ENCODE measurements at regions of chr11 and their contacts with region 1.

Region 1: GRCh38 chr11:124875943-124876817 is 10.9 kb downstream of the ROBO3 start:
- DNase-seq: peak; percentile 96
- ATAC-seq: peak; percentile 96
- H3K4me3 ChIP-seq: peak overlapping the region; percentile 58
- H3K27ac ChIP-seq: peak overlapping the region; percentile 83
- H3K4me1 ChIP-seq: peaks cover 3% of the 10 kb centered on the region
- H3K27me3 ChIP-seq: peaks cover 23% of the 10 kb centered on the region
- CTCF ChIP-seq: peak; percentile 80
- POLR2A ChIP-seq: peak; percentile 85
- RAD21 ChIP-seq: peak; percentile 57

Region 2: GRCh38 chr11:124865921-124866583 is 10.1 kb before region 1 on chr11:
- CTCF ChIA-PET with region 1: interaction called, 19 read pairs
- POLR2A ChIA-PET with region 1: no interaction called
- dilution Hi-C with region 1: no loop called
- in situ Hi-C with region 1: no loop called
- intact Hi-C with region 1: no loop called
- DNase-seq: peak; percentile 15
- ATAC-seq: peak; percentile 56
- H3K4me3 ChIP-seq: peak overlapping the region; percentile 20; the same call in 1 of the 2 replicates
- H3K27ac ChIP-seq: no peak overlapping the region
- H3K4me1 ChIP-seq: peaks cover 2% of the 10 kb centered on the region
- H3K27me3 ChIP-seq: peaks cover 97% of the 10 kb centered on the region
- CTCF ChIP-seq: peak; percentile 69
- POLR2A ChIP-seq: no peak
- RAD21 ChIP-seq: peak; percentile 42; the same call in 1 of the 2 replicates

Region 3: DNA sequence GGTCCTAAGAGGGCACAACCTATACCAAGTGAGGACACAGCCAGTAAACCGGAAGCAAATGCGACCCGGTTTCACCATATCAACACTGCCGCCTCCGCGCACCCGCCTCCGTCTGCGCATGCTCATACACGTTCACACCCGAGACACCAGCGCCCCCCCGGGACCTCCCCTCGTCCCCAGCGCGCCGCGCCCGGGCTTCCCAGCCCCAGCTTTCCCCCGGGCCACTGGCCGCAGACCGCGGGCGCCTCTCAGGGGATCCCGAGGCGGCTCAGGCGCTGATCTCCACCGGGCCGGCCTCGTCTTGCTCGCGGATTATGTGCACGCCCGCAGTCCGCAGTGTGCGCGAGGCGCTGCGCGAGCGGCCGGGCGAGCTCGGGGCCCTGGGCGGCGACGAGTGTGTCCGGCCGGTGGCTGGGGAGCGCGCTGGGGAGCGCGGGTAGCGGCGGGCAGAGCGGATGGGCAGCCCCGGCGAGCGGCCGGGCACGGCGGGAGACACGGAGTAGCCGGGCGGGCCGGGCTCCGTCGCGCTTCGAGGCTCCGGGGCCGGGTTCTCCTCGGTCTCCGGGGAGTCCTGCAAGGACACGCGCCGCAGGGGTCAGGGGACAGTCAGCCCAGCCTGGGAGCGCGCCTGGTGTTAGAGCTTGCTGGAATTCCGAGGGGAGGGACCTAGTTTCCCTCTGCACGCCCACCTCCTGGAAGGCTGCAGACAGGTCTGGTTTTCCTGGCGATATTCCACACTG is 44.9 kb after region 1 on chr11:
- CTCF ChIA-PET with region 1: no interaction called
- POLR2A ChIA-PET with region 1: no interaction called
- dilution Hi-C with region 1: no loop called
- in situ Hi-C with region 1: no loop called
- intact Hi-C with region 1: loop called (anchors 2 kb)
- DNase-seq: peak; percentile 47
- ATAC-seq: peak; percentile 76
- H3K4me3 ChIP-seq: peak overlapping the region; percentile 31
- H3K27ac ChIP-seq: peak overlapping the region; percentile 8; the same call in 1 of the 2 replicates
- H3K4me1 ChIP-seq: peaks cover 8% of the 10 kb centered on the region
- H3K27me3 ChIP-seq: no peaks in the 10 kb centered on the region
- CTCF ChIP-seq: 0 out of 2 replicates have a peak, but pooled peaks have one; percentile 13
- POLR2A ChIP-seq: no peak
- RAD21 ChIP-seq: no peak

Region 4: DNA sequence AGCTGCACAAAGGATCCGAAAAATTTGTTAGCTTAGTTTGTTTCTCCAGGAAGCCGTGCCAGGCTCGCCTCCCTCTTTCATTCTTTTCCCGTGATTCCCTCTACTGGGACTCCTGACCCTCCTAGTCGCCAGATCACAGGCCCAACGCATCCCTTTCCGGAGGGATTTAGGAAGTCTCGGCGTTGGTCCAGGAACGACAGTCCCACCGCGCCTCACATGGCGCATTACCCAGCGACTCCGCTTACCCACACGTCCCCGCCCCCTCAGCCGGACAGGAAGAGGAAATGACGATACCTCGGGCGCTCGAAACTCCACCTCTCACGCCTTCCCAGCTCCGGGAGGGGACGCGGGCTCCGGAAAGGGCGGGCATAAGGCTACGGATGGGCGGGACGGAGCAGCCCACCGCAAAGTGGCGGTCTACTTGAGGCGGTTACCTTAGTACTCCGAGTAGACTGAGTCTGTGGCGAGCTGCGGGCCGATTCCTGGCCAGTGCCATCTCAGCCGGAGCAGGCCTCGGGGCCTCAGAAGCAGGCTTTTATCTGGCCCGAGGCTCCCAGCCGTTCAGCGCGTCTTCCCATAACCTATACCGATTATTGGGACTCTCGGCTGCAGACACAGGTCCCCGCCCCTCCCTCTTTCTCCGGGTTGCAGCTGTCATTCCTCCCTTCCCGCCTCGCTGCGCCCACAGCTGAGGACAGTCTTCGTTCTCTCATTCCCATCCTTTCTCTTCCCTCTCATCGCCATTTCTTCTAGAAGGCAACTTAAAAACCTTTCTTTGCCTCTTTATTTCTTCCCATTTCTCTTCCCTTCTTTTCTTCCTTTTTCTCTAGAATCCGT is 77.8 kb after region 1 on chr11 and contains the start of gene CCDC15:
- CTCF ChIA-PET with region 1: interaction called, 10 read pairs
- POLR2A ChIA-PET with region 1: interaction called, 6 read pairs
- dilution Hi-C with region 1: no loop called
- in situ Hi-C with region 1: loop called (anchors 5 kb)
- intact Hi-C with region 1: loop called (anchors 1 kb)
- DNase-seq: peak; percentile 97
- ATAC-seq: peak; percentile 99
- H3K4me3 ChIP-seq: peak within 1 kb of the TSS; percentile 60
- H3K27ac ChIP-seq: peak within 1 kb of the TSS; percentile 75
- H3K4me1 ChIP-seq: peaks cover 2% of the 10 kb centered on the region; the same call in 1 of the 2 replicates
- H3K27me3 ChIP-seq: no peaks in the 10 kb centered on the region
- CTCF ChIP-seq: 0 out of 2 replicates have a peak, but pooled peaks have one; percentile 3
- POLR2A ChIP-seq: peak; percentile 90
- RAD21 ChIP-seq: peak; percentile 5; the same call in 1 of the 2 replicates
- total RNA-seq, gene CCDC15: 2.0 and 2.5 TPM in 2 replicates

Region 5: DNA sequence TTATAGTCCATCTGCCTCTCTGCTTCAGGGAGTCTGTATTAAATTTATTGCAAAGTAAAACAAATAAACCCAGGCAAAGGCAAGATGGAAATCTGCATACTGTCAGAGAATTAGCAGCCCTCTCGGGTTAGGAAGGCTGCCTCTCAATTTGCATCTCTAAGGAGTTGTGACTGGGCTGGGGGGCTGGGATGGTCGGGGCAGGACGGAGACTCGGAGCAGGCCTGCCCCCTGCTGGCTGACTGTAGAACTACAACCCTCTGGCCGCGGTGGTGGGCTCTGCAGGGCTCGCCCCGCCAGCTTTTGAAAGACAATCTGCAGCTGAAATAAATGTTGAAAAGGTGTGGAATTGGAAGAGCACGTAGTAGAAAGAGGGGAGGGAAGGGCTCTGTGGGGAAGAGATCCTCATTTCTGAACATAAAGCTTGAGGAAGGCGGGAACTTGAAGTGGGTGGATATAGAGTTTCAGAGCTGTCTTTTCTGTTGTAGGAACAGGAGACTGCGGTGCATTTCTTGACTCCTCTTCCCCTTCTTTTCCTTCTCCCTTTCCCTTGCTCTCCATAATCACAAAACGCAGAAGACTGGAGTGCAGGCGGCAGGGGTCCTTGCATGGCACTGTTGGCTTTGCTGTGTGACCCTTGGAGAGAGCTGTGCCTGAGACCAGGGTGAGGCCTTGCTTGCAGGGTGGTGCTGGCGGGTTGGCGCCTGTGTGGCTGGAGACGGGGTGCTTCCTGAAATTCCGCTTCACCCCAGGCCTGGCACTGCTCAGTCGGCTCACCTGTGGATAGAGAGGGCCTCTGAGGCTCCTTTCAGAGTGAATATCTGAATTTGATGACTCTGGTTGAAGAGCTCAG is 265.7 kb after region 1 on chr11:
- CTCF ChIA-PET with region 1: no interaction called
- POLR2A ChIA-PET with region 1: no interaction called
- dilution Hi-C with region 1: no loop called
- in situ Hi-C with region 1: no loop called
- intact Hi-C with region 1: loop called (anchors 5 kb)
- DNase-seq: peak; percentile 29
- ATAC-seq: peak; percentile 100
- H3K4me3 ChIP-seq: no peak overlapping the region
- H3K27ac ChIP-seq: no peak overlapping the region
- H3K4me1 ChIP-seq: no peaks in the 10 kb centered on the region; the same call in 1 of the 2 replicates
- H3K27me3 ChIP-seq: peaks cover 13% of the 10 kb centered on the region
- CTCF ChIP-seq: peak; percentile 83
- POLR2A ChIP-seq: 0 out of 2 replicates have a peak, but pooled peaks have one; percentile 29
- RAD21 ChIP-seq: peak; percentile 82